PC-9 (cell line): ENCODE measurements at regions of chr18 and their contacts with region 1.

Region 1: DNA sequence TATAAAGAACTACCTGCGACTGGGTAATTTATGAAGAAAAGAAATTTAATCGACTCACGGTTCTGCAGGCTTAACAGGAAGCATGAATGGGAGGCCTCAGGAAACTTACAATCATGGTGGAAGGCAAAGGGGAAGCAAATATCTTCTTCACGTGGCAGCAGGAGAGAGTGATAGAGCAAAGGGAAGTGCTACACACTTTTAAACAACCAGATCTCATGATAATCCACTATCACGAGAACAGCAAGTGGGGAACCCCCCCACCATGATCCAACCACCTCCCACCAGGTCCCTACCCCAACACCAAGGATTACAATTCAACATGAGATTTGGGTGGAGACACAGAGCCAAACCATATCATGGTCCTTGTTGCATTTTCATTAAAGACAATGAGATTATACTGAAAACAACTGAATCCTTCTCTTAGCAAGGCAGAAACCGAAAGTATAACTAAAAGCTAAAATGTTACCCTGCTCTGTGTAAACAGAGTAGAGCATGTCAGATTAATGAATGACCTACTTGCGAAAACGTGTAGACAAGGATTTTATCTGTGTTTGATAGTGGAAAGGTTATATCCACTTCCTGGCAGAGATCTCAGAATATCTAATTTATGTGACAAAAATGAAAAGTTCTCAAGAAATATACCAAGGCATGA is 60.1 kb upstream of the RBBP8 start:
- DNase-seq: no peak
- H3K4me3 ChIP-seq: no peak overlapping the region
- H3K27ac ChIP-seq: no peak overlapping the region
- H3K4me1 ChIP-seq: no peaks in the 10 kb centered on the region
- H3K27me3 ChIP-seq: no peaks in the 10 kb centered on the region
- CTCF ChIP-seq: no peak

Region 2: DNA sequence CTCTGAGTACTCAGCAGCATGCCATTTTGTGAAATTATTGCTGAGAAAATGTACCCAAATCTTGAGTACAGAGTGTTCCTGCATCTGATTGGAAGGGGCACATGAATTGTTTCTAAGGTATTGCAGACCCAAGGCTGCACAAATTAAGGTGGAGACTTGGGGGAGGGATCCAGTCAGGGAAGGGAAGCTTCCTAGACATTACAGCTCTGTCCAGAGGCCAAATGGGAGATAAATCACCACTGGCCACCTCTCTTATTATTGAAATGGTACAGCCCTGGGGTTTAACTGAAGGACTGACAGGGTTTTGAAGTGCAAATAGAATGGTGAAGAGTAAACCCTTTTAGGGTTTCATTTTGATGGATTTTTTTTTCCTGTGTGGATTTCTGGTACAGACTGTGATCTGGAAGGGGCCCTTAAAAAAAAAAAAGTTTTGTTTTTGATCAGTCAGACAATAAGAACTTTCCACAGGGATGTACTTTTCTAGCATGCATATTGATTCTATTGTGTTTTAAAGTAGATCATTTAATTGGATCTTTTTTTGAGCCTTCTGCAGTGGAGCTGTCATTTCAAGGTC is 1511.6 kb before region 1 on chr18:
- CTCF ChIA-PET with region 1: no interaction called
- POLR2A ChIA-PET with region 1: no interaction called
- intact Hi-C with region 1: no loop called
- DNase-seq: no peak
- H3K4me3 ChIP-seq: no peak overlapping the region
- H3K27ac ChIP-seq: no peak overlapping the region
- H3K4me1 ChIP-seq: no peaks in the 10 kb centered on the region
- H3K27me3 ChIP-seq: no peaks in the 10 kb centered on the region
- CTCF ChIP-seq: no peak

Region 3: GRCh38 chr18:22838639-22839277 is 34.3 kb before region 1 on chr18:
- CTCF ChIA-PET with region 1: no interaction called
- POLR2A ChIA-PET with region 1: interaction called, 15 read pairs
- intact Hi-C with region 1: no loop called
- DNase-seq: no peak
- H3K4me3 ChIP-seq: no peak overlapping the region
- H3K27ac ChIP-seq: no peak overlapping the region
- H3K4me1 ChIP-seq: peaks cover 13% of the 10 kb centered on the region
- H3K27me3 ChIP-seq: no peaks in the 10 kb centered on the region
- CTCF ChIP-seq: no peak

Region 4: GRCh38 chr18:22913857-22914256 is 40.8 kb after region 1 on chr18:
- CTCF ChIA-PET with region 1: interaction called, 10 read pairs
- POLR2A ChIA-PET with region 1: no interaction called
- intact Hi-C with region 1: no loop called
- DNase-seq: peak; percentile 77 to 93
- H3K4me3 ChIP-seq: peak overlapping the region; percentile 22; the same call in 1 of the 2 replicates
- H3K27ac ChIP-seq: peak overlapping the region; percentile 93
- H3K4me1 ChIP-seq: peaks cover 40% of the 10 kb centered on the region
- H3K27me3 ChIP-seq: no peaks in the 10 kb centered on the region
- CTCF ChIP-seq: no peak